IMR-90 (cell line): ENCODE measurements at regions of chr16 and their contacts with region 1.

Region 1: GRCh38 chr16:87661561-87661960 is 59.3 kb downstream of the JPH3 start:
- DNase-seq: peak; percentile 43
- ATAC-seq: peak; percentile 95
- H3K4me3 ChIP-seq: no peak overlapping the region
- H3K27ac ChIP-seq: no peak overlapping the region
- H3K4me1 ChIP-seq: no peaks in the 10 kb centered on the region
- H3K27me3 ChIP-seq: peaks cover 43% of the 10 kb centered on the region
- CTCF ChIP-seq: no peak
- POLR2A ChIP-seq: no peak
- RAD21 ChIP-seq: no peak

Region 2: GRCh38 chr16:87407511-87408112 is 253.9 kb before region 1 on chr16:
- CTCF ChIA-PET with region 1: no interaction called
- POLR2A ChIA-PET with region 1: no interaction called
- dilution Hi-C with region 1: no loop called
- in situ Hi-C with region 1: no loop called
- intact Hi-C with region 1: no loop called
- DNase-seq: no peak
- ATAC-seq: no peak
- H3K4me3 ChIP-seq: no peak overlapping the region
- H3K27ac ChIP-seq: no peak overlapping the region
- H3K4me1 ChIP-seq: no peaks in the 10 kb centered on the region
- H3K27me3 ChIP-seq: no peaks in the 10 kb centered on the region
- CTCF ChIP-seq: no peak
- POLR2A ChIP-seq: no peak
- RAD21 ChIP-seq: no peak

Region 3: DNA sequence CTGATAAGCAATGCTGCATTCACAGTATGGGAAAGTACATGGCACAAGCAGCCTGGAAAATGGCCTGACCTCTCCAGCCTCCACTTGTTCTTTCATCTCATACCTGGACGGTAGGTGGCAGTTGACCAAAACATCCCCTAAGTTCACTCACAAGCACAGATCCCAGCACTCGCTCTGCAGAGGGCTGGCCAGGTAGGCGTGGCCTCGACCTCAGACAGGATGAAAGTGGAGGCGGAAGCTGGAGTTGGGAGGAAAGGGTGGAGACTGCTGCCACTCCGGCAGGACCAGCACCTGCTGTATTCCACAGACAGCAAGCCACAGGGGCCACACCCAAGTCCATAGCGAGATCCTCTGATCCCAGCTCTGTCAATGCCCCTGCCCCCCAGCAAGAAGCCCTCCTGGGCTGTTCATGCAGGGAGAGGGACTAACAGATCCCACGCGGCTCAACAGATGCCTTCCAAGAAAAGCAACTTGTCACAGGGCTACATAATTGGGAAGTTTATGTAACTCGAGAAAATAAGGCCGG is 200.0 kb before region 1 on chr16:
- CTCF ChIA-PET with region 1: no interaction called
- POLR2A ChIA-PET with region 1: no interaction called
- dilution Hi-C with region 1: no loop called
- in situ Hi-C with region 1: no loop called
- intact Hi-C with region 1: no loop called
- DNase-seq: no peak
- ATAC-seq: no peak
- H3K4me3 ChIP-seq: no peak overlapping the region
- H3K27ac ChIP-seq: no peak overlapping the region
- H3K4me1 ChIP-seq: peaks cover 33% of the 10 kb centered on the region
- H3K27me3 ChIP-seq: no peaks in the 10 kb centered on the region
- CTCF ChIP-seq: no peak
- POLR2A ChIP-seq: no peak
- RAD21 ChIP-seq: no peak

Region 4: DNA sequence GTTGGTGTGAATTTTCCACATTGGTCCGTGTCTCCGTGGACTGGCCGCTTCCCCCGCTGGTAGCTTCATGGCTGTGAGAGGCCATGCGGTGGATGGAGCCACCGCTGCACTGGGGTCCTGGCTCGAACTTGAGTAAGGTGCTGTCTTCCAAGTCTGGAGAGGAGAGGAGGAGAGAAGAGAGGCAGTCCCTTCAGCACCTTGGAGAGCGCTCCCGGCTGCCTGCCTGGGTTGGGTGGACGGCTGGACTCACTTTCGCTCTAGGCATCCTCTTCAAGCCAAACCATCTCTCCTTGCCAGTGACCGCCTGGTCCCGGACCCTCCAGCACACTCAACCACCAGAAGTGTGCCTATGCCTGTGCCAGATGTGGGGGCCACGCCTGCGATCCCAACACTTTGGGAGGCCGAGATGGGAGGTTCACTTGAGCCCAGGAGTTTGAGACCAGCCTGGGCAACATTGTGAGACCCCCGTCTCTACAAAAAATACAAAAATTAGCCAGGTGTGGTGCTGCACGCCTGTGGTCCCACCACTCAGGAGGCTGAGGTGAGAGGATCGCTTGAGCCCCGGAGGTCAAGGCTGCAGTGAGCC is 53.1 kb before region 1 on chr16:
- CTCF ChIA-PET with region 1: no interaction called
- POLR2A ChIA-PET with region 1: no interaction called
- dilution Hi-C with region 1: no loop called
- in situ Hi-C with region 1: no loop called
- intact Hi-C with region 1: loop called (anchors 1 kb)
- DNase-seq: peak; percentile 52
- ATAC-seq: peak; percentile 96
- H3K4me3 ChIP-seq: no peak overlapping the region
- H3K27ac ChIP-seq: no peak overlapping the region
- H3K4me1 ChIP-seq: no peaks in the 10 kb centered on the region
- H3K27me3 ChIP-seq: peaks cover 42% of the 10 kb centered on the region
- CTCF ChIP-seq: no peak
- POLR2A ChIP-seq: no peak
- RAD21 ChIP-seq: no peak

Region 5: GRCh38 chr16:87757915-87758314 is 96.4 kb after region 1 on chr16:
- CTCF ChIA-PET with region 1: no interaction called
- POLR2A ChIA-PET with region 1: no interaction called
- dilution Hi-C with region 1: no loop called
- in situ Hi-C with region 1: no loop called
- intact Hi-C with region 1: no loop called
- DNase-seq: peak; percentile 89
- ATAC-seq: peak; percentile 89
- H3K4me3 ChIP-seq: no peak overlapping the region
- H3K27ac ChIP-seq: no peak overlapping the region
- H3K4me1 ChIP-seq: peaks cover 4% of the 10 kb centered on the region; the same call in 1 of the 2 replicates
- H3K27me3 ChIP-seq: no peaks in the 10 kb centered on the region
- CTCF ChIP-seq: no peak
- POLR2A ChIP-seq: no peak
- RAD21 ChIP-seq: no peak